CD8-positive, alpha-beta T cell (primary cell): ENCODE measurements at regions of chr22 and their contacts with region 1.

Region 1: DNA sequence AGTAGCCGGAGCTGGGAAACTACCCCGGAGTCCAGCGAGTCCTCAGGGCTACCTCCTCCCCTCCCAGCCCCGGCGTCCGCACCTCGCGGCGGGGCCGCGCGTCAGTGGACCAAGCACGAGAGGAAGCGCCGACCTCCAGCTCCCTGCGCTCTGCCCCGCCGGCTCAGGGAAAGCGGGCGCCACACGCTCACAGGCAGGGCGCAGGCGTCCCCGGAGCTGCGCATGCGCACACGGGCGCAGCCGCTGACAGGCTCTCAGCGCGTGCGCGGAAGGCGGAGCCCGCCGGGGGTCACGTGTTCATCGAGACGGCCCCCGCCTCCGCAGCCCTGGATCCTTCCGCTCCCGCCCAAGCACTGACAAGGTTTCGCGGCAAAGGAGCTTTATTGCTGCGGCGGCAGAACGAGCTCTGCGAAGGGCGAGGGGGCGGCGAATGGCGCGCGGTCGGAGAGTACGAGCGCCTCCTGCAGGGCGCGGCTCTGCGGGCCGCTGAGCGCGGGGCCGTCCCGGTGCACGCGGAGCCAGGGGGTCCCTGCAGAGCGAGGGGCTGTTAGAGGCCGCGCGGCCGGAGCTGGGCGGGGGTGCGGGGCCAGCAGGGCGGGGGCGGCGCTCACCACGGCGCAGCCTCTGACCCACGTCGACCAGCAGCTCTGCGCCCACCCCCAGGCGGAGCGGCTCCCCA is at the start of gene SCO2:
- DNase-seq: peak; percentile 94 to 99 (median 97)
- ATAC-seq: peak; percentile 76
- H3K4me3 ChIP-seq: peak within 1 kb of the TSS; percentile 69 to 92
- H3K4me3 Mint-ChIP-seq: peak within 1 kb of the TSS; percentile 88
- H3K27ac ChIP-seq: peak within 1 kb of the TSS; percentile 68 to 82
- H3K27ac Mint-ChIP-seq: peak within 1 kb of the TSS; percentile 89
- H3K4me1 ChIP-seq: peaks cover 43% of the 10 kb centered on the region
- H3K4me1 Mint-ChIP-seq: peaks cover 27% of the 10 kb centered on the region
- H3K27me3 ChIP-seq: no peaks in the 10 kb centered on the region
- H3K27me3 Mint-ChIP-seq: no peaks in the 10 kb centered on the region
- CTCF ChIP-seq: no peak
- total RNA-seq, gene SCO2: 1.5 to 4.2 TPM

Region 2: DNA sequence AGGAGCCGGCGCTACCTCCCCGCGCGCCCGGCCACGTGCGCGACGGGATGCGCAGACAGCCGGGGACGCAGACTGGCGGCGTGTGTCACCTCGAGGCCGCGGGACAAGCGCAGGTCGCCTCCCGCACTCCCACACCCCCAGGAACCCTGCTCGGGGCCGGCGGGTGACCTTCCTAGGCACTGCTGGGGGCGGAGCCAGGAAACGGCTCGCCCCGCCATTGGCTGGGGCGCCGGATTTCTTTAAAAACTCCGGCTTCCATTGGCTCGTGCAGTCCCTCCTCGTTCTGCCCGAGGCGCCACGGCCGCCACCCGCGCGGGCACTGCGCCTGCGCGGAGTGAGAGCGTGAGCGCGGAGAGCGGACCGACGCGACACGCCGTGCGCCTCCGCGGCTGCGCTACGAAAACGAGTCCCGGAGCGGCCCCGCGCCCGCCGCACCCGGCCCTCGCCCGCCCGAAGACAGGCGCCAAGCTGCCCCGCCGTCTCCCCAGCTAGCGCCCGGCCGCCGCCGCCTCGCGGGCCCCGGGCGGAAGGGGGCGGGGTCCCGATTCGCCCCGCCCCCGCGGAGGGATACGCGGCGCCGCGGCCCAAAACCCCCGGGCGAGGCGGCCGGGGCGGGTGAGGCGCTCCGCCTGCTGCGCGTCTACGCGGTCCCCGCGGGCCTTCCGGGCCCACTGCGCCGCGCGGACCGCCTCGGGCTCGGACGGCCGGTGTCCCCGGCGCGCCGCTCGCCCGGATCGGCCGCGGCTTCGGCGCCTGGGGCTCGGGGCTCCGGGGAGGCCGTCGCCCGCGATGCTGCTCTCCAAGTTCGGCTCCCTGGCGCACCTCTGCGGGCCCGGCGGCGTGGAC is 565.1 kb before region 1 on chr22 and contains the start of gene PIM3:
- CTCF ChIA-PET with region 1: no interaction called
- POLR2A ChIA-PET with region 1: interaction called, 3 read pairs
- intact Hi-C with region 1: loop called in 1 of 2 experiments (anchors 10 kb)
- DNase-seq: peak; percentile 80 to 96 (median 90)
- ATAC-seq: peak; percentile 61
- H3K4me3 ChIP-seq: peak within 1 kb of the TSS; percentile 67 to 86
- H3K4me3 Mint-ChIP-seq: peak within 1 kb of the TSS; percentile 93
- H3K27ac ChIP-seq: peak within 1 kb of the TSS; percentile 71 to 80
- H3K27ac Mint-ChIP-seq: peak within 1 kb of the TSS; percentile 95
- H3K4me1 ChIP-seq: peaks cover 33% of the 10 kb centered on the region
- H3K4me1 Mint-ChIP-seq: peaks cover 17% of the 10 kb centered on the region
- H3K27me3 ChIP-seq: no peaks in the 10 kb centered on the region
- H3K27me3 Mint-ChIP-seq: no peaks in the 10 kb centered on the region
- CTCF ChIP-seq: no peak
- total RNA-seq, gene PIM3: 316 to 328 TPM

Region 3: GRCh38 chr22:50250555-50251476 is 274.7 kb before region 1 on chr22 and contains the start of gene HDAC10:
- CTCF ChIA-PET with region 1: interaction called, 5 read pairs
- POLR2A ChIA-PET with region 1: interaction called, 11 read pairs
- intact Hi-C with region 1: loop called (anchors 2 to 5 kb)
- DNase-seq: peak; percentile 38 to 90 (median 77)
- ATAC-seq: peak; percentile 72
- H3K4me3 ChIP-seq: peak within 1 kb of the TSS; percentile 77 to 89
- H3K4me3 Mint-ChIP-seq: peak within 1 kb of the TSS; percentile 81
- H3K27ac ChIP-seq: peak within 1 kb of the TSS; percentile 58 to 67
- H3K27ac Mint-ChIP-seq: no peak within 1 kb of the TSS
- H3K4me1 ChIP-seq: peaks cover 36% of the 10 kb centered on the region
- H3K4me1 Mint-ChIP-seq: peaks cover 22% of the 10 kb centered on the region
- H3K27me3 ChIP-seq: no peaks in the 10 kb centered on the region
- H3K27me3 Mint-ChIP-seq: no peaks in the 10 kb centered on the region
- CTCF ChIP-seq: no peak
- total RNA-seq, gene HDAC10: 81.8 to 82.6 TPM

Region 4: DNA sequence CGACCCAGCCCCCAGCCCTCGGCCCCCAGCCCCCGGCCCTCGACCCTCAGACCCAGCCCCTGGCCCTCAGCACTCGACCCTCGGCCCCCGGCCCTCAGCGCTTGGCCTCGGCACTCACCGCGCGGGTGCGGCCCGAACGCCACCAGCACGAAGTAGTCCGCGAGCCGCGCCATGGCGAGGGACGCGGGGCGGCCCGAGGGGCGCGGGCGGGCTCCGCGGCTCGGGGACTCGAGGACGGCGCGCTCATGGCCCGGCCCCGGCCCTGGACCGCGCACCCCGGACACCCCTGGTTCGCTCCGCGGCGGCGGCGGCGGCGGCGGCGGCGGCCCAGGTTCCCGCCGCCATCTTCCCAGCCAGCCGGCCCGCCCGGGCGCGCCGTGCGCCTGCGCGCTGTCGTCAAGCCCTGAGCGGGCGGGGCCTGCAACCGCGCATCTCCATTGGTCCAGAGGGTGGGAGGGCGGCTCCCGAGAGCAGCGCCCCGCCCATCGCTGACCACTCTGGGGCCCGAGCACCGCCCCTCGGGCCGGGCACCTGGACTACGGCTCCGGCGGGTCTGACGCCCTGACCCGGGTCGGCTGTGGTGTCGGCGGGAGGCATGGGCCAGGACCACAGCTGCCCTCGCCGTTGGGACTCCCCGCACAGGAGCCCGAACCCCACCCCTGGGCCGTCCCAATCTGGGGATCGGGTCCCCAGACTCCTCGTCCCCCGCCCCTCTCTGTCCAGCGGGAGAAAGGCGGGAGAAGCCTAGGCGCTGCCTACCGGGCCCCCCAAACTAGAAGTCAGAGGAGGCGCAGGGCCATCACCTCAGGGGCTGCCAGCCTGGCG is 50.6 kb before region 1 on chr22 and contains the start of gene SBF1:
- CTCF ChIA-PET with region 1: interaction called, 7 read pairs
- POLR2A ChIA-PET with region 1: interaction called, 22 read pairs
- intact Hi-C with region 1: loop called in 1 of 2 experiments (anchors 1 kb)
- DNase-seq: peak; percentile 78 to 94 (median 86)
- ATAC-seq: peak; percentile 65
- H3K4me3 ChIP-seq: peak within 1 kb of the TSS; percentile 63 to 82
- H3K4me3 Mint-ChIP-seq: peak within 1 kb of the TSS; percentile 94
- H3K27ac ChIP-seq: peak within 1 kb of the TSS; percentile 62 to 73
- H3K27ac Mint-ChIP-seq: peak within 1 kb of the TSS; percentile 96
- H3K4me1 ChIP-seq: peaks cover 46% of the 10 kb centered on the region
- H3K4me1 Mint-ChIP-seq: peaks cover 45% of the 10 kb centered on the region
- H3K27me3 ChIP-seq: no peaks in the 10 kb centered on the region
- H3K27me3 Mint-ChIP-seq: no peaks in the 10 kb centered on the region
- CTCF ChIP-seq: no peak
- total RNA-seq, gene SBF1: 209 to 215 TPM

Region 5: GRCh38 chr22:50544078-50544745 is 18.7 kb after region 1 on chr22:
- CTCF ChIA-PET with region 1: interaction called, 36 read pairs
- POLR2A ChIA-PET with region 1: interaction called, 52 read pairs
- intact Hi-C with region 1: loop called in 1 of 2 experiments (anchors 2 kb)
- DNase-seq: peak; percentile 62 to 92 (median 84)
- ATAC-seq: peak; percentile 54
- H3K4me3 ChIP-seq: peak overlapping the region; percentile 43 to 48
- H3K4me3 Mint-ChIP-seq: peak overlapping the region; percentile 54
- H3K27ac ChIP-seq: peak overlapping the region; percentile 40 to 81
- H3K27ac Mint-ChIP-seq: peak overlapping the region; percentile 57
- H3K4me1 ChIP-seq: peaks cover 42% of the 10 kb centered on the region
- H3K4me1 Mint-ChIP-seq: peaks cover 45% of the 10 kb centered on the region
- H3K27me3 ChIP-seq: no peaks in the 10 kb centered on the region
- H3K27me3 Mint-ChIP-seq: no peaks in the 10 kb centered on the region
- CTCF ChIP-seq: peak; percentile 75

Region 6: GRCh38 chr22:50627642-50628542 is 102.4 kb after region 1 on chr22 and contains the start of gene ARSA:
- CTCF ChIA-PET with region 1: interaction called, 7 read pairs
- POLR2A ChIA-PET with region 1: interaction called, 61 read pairs
- intact Hi-C with region 1: no loop called
- DNase-seq: peak; percentile 53 to 93 (median 76)
- ATAC-seq: peak; percentile 90
- H3K4me3 ChIP-seq: peak within 1 kb of the TSS; percentile 78 to 91
- H3K4me3 Mint-ChIP-seq: peak within 1 kb of the TSS; percentile 91
- H3K27ac ChIP-seq: peak within 1 kb of the TSS; percentile 62 to 82
- H3K27ac Mint-ChIP-seq: peak within 1 kb of the TSS; percentile 95
- H3K4me1 ChIP-seq: peaks cover 25% of the 10 kb centered on the region
- H3K4me1 Mint-ChIP-seq: peaks cover 20% of the 10 kb centered on the region
- H3K27me3 ChIP-seq: no peaks in the 10 kb centered on the region
- H3K27me3 Mint-ChIP-seq: no peaks in the 10 kb centered on the region
- CTCF ChIP-seq: no peak
- total RNA-seq, gene ARSA: 37.1 to 43.4 TPM